ENCODE measurements at regions of chr14 and their contacts with region 1.

Region 1: DNA sequence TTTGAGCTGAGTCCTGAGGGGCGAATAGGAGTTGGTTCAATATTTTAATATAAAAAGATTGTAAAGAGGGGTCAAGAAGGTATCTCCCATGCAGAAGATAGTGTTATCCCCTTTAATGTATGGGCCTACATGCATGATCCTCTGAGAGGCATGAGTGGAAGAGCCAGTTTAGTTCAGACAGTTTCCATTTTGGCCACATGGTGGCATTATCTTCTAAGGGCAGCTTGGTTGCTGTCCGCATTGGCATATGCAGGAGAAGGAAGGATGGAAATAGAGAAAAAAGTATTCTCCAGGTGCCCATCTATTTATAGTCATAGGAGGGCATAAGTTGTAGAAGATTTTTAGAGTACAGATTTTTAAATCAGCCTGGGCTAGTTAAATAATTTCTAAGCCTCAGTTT is 5.4 kb downstream of the SAMD4A start:
- DNase-seq: no peak
- H3K4me3 ChIP-seq: no peak overlapping the region
- H3K27ac ChIP-seq: no peak overlapping the region
- H3K4me1 ChIP-seq: peaks cover 0 to 34% (median 19%) of the 10 kb centered on the region in 4 donors
- H3K27me3 ChIP-seq: no peaks in the 10 kb centered on the region
- CTCF ChIP-seq: peak; percentile 20 to 41 (median 27)
- EP300 ChIP-seq: no peak
- POLR2A ChIP-seq: no peak

Region 2: DNA sequence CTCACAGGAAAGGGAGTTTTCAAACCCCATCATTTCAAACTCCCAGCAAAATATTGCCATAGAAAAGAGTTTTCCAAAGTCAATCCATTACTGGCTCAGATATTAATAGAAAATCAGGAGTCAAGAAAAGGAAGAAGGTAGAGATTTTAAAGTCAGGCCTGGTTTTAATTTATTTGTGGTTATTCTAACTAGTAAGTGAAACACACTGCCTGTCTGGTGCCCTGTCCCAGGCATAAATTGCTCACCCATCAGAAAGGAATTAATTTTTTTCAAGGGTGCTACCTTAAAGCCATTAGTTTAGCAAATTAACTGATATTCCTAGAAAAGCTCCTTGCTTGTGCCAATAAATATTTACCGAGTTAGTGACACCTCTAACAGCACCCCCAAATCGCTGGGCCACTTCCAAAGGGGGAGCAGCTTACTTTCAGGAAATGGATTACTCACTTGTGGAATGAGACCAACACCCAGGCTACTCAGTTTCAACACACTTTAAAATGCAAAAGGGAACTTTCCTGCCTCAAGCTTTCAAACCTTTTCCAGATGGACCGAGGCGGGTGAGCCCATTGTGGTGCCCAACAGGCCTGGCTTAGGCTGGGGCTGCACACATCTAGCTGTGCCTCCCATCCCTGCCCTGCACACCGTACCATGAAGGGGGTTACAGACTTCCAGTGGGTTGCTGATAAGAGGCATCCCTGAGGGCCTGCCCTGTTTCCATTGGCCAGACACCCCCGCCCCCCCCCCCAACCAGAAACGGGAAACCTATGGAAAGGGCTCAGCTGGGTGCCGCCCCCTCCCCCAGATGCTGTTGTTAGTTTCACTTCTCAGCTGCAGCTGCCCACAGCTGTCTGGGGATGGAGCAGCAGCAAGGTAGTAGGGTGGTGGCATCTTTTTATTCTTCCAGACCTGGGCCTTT is 111.8 kb after region 1 on chr14:
- in situ Hi-C with region 1: loop called in 1 of 4 experiments (anchors 10 kb)
- intact Hi-C with region 1: no loop called
- DNase-seq: peak; percentile 37
- H3K4me3 ChIP-seq: no peak overlapping the region
- H3K27ac ChIP-seq: peak overlapping the region; percentile 61 to 80 (median 78)
- H3K4me1 ChIP-seq: peaks cover 0 to 46% (median 15%) of the 10 kb centered on the region in 4 donors
- H3K27me3 ChIP-seq: no peaks in the 10 kb centered on the region
- CTCF ChIP-seq: no peak
- EP300 ChIP-seq: no peak
- POLR2A ChIP-seq: no peak

Region 3: DNA sequence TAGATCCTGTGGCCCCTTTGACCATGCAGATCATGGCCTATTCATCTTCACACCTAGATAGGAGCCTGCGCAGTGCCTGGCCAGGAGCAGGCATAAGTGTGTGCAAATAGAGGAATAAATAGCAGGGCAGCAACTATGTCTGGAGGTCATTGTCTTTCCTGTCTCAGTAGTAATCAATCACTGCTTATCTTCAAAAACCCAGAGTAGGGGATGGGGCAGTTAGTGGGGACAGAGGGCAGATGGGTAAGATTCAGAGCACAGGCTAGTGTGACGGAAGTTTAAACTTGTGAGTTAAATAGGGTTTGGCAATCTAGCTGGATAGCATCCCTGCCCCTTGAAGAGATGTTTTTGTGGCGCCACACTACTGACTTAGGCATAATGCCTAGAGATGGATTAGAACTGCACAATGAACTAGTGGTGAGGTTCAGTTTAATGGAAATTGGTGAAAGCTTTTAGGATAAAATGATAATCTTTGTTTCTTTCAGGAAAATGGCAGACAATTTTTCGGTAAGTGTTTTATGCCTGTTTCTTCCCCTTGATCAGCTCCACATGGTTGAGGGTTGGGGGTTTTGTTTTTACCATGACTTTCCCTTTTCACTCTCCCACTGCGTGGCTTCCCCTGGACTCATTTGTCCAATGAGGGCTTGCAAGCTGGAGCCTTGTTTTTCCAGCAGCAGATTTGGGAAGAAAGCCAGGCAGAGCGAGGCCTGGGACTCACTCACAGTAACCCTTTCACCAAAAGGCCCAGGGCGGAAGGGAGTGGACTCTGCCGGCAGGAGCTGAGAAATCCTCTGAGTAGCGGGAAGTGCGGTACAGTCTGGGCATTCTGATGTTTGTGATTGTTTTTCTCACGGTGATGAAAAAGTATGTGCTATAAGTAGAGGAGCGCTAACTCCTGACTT is 564.8 kb after region 1 on chr14:
- in situ Hi-C with region 1: no loop called
- intact Hi-C with region 1: no loop called
- DNase-seq: peak; percentile 41
- H3K4me3 ChIP-seq: peak overlapping the region in 1 of 4 donors; percentile 5
- H3K27ac ChIP-seq: peak overlapping the region; percentile 60 to 76 (median 68)
- H3K4me1 ChIP-seq: peaks cover 20 to 70% (median 37%) of the 10 kb centered on the region in 4 donors
- H3K27me3 ChIP-seq: no peaks in the 10 kb centered on the region
- CTCF ChIP-seq: no peak
- EP300 ChIP-seq: no peak
- POLR2A ChIP-seq: no peak

Region 4: DNA sequence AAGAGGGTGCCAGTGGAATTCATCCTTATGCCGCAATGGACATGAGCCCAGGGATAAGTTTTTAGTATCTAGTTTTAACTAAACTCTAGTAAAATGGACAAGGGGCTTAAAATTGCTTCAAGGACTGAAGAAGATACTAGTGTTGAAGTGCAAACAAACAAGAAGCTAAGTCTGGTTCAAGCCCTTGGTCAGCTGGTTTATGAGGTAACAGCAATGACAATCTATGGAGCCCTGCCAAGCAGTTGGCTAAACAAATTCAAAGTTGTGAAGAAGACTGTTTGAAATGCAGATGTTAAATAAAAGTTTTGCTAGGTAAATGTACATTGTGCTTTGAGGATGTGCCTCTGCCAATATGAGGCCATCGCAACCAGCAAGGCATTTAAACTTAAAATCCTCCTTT is 1217.1 kb after region 1 on chr14:
- in situ Hi-C with region 1: no loop called
- intact Hi-C with region 1: no loop called
- DNase-seq: no peak
- H3K4me3 ChIP-seq: no peak overlapping the region
- H3K27ac ChIP-seq: no peak overlapping the region
- H3K4me1 ChIP-seq: peaks cover 0 to 10% (median 0%) of the 10 kb centered on the region in 4 donors
- H3K27me3 ChIP-seq: no peaks in the 10 kb centered on the region
- CTCF ChIP-seq: no peak
- EP300 ChIP-seq: no peak
- POLR2A ChIP-seq: no peak